ENCODE measurements at regions of chr17 and their contacts with region 1.

Region 1: GRCh38 chr17:74219576-74220133 is 6.3 kb downstream of the TTYH2 start:
- DNase-seq: no peak
- H3K4me3 Mint-ChIP-seq: no peak overlapping the region
- H3K27ac Mint-ChIP-seq: no peak overlapping the region
- H3K4me1 Mint-ChIP-seq: no peaks in the 10 kb centered on the region
- H3K27me3 Mint-ChIP-seq: peaks cover 91% of the 10 kb centered on the region
- CTCF ChIP-seq: no peak

Region 2: GRCh38 chr17:73600103-73600871 is 619.4 kb before region 1 on chr17:
- CTCF ChIA-PET with region 1: no interaction called
- intact Hi-C with region 1: loop called (anchors 5 kb)
- DNase-seq: no peak
- H3K4me3 Mint-ChIP-seq: no peak overlapping the region
- H3K27ac Mint-ChIP-seq: no peak overlapping the region
- H3K4me1 Mint-ChIP-seq: no peaks in the 10 kb centered on the region
- H3K27me3 Mint-ChIP-seq: peaks cover 89% of the 10 kb centered on the region
- CTCF ChIP-seq: no peak

Region 3: DNA sequence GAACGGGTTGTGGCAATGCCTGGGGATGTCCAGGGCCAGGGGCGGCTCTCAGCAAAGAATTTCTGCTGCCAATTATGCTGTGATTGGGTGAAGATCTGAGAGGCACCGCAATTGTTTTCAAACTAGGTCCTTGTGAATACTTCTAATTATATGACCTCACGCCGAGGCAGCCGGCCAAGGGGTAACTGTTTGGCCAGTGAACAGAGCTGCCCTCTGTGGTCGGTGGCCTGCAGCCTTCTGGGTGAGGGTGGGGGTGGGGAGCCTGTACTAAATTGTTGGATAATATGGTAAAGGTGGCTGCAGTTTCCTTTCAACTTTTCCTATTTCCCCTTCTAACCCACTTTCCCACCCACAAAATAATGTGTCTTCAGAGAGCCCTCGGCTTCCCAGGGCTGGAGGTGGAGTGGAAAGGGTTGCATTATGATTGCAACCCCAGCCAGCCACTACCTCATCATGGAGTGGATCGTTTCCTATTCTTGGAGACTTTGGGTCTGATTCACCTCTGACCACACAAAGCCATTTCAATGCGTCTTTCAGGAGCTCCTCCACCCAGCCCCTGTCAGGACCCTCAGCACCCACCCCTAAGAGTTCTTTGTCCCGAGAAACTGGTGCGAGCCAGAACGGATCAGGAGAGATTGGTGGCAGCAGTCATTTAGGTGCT is 52.4 kb after region 1 on chr17:
- CTCF ChIA-PET with region 1: no interaction called
- intact Hi-C with region 1: no loop called
- DNase-seq: no peak
- H3K4me3 Mint-ChIP-seq: no peak overlapping the region
- H3K27ac Mint-ChIP-seq: no peak overlapping the region
- H3K4me1 Mint-ChIP-seq: no peaks in the 10 kb centered on the region
- H3K27me3 Mint-ChIP-seq: peaks cover 100% of the 10 kb centered on the region
- CTCF ChIP-seq: no peak